ENCODE measurements at regions of chr20 and their contacts with region 1.

Region 1: DNA sequence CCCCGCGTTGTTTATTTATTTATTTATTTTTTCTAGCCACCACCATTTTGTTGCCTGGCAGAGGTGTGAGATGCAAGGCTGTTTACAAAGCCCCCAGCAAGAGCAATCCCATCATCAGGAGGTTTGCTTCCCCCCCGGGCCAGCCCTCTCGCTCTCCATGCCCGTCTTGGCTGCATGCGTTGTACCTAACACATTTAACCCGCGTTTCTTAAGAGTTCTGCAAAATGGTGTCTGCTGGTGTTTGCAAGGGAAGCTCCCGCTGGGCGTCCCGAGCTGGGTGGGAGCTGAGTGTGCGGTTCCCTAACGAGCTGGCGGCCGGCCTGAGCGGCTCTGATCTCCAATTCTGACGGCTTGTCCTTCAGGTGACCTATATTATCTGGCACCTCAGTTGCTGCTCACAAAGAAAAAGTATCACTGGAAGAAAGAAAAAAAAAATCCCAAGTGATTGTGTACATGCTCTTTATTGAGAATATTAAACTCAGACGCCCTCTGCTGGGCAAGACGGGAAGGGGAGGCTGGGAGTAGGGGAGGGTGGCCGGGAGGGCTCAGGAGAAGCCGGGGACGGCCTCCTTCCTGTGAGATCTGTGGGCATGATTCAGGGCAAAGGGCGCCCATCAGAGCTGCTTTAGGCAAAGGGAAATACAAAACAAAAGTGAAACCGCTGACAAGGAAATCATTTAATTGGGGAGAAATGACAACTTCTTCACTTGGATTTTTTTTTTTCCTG is 154.8 kb downstream of the BCAS1 start:
- DNase-seq: peak; percentile 86
- ATAC-seq: peak; percentile 88
- H3K4me3 ChIP-seq: peak overlapping the region; percentile 63
- H3K27ac ChIP-seq: peak overlapping the region; percentile 82
- H3K4me1 ChIP-seq: peaks cover 31% of the 10 kb centered on the region
- H3K27me3 ChIP-seq: no peaks in the 10 kb centered on the region
- CTCF ChIP-seq: peak; percentile 93
- POLR2A ChIP-seq: peak; percentile 53; the same call in 1 of the 2 replicates
- RAD21 ChIP-seq: peak; percentile 92

Region 2: GRCh38 chr20:53656293-53657202 is 259.1 kb before region 1 on chr20:
- CTCF ChIA-PET with region 1: no interaction called
- POLR2A ChIA-PET with region 1: no interaction called
- dilution Hi-C with region 1: no loop called
- in situ Hi-C with region 1: no loop called
- intact Hi-C with region 1: loop called (anchors 5 kb)
- DNase-seq: peak; percentile 76
- ATAC-seq: peak; percentile 44; the same call in 1 of the 2 replicates
- H3K4me3 ChIP-seq: no peak overlapping the region
- H3K27ac ChIP-seq: peak overlapping the region; percentile 50; the same call in 1 of the 2 replicates
- H3K4me1 ChIP-seq: peaks cover 30% of the 10 kb centered on the region
- H3K27me3 ChIP-seq: no peaks in the 10 kb centered on the region
- CTCF ChIP-seq: no peak
- POLR2A ChIP-seq: no peak
- RAD21 ChIP-seq: no peak

Region 3: DNA sequence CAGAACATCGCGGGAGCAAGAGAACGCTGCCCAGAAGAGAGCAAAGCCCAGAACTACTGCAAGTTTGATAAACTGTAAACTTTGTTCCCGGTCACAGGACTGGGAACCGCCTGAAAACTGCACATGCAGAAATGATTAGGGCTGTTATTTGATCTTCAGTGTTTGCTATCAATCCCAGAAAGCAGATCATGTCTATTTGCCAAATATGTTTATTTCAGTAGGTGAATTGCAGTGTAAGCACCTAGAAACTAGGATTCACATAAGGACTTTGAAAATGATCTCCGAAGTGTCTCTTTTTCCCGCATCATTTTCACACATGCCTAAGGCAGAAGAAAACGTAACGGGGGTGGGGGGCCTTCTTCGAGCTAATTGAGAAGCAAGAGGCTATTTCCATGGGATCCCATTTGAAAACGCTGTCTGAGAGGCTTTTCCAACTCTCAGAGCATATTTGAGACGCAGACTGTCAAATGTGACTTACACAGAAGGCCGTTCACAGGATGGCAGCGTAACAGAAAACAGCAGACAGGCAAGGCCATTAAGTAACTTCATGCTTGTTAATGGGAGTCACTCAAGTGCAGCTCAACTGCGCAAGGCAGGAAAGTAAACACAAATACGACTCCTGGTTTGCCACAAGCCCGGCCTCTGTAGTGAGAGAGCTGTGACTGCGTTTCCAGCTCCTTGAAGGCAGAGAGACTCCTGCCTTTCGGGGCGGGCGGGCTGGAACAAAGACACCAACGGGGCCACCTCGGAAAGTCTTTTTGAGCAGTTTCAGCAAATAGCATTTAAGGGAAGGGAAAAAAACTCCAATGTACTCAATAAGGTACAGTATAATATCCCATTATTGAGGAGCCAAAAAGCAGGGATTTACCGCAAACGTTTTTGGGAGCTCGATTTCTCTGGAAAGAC is 177.3 kb before region 1 on chr20:
- CTCF ChIA-PET with region 1: interaction called, 4 read pairs
- POLR2A ChIA-PET with region 1: no interaction called
- dilution Hi-C with region 1: no loop called
- in situ Hi-C with region 1: no loop called
- intact Hi-C with region 1: loop called (anchors 2 kb)
- DNase-seq: peak; percentile 90
- ATAC-seq: peak; percentile 82
- H3K4me3 ChIP-seq: peak overlapping the region; percentile 22; the same call in 1 of the 2 replicates
- H3K27ac ChIP-seq: peak overlapping the region; percentile 75
- H3K4me1 ChIP-seq: peaks cover 28% of the 10 kb centered on the region
- H3K27me3 ChIP-seq: no peaks in the 10 kb centered on the region
- CTCF ChIP-seq: no peak
- POLR2A ChIP-seq: peak; percentile 75
- RAD21 ChIP-seq: no peak

Region 4: GRCh38 chr20:53773792-53774401 is 141.7 kb before region 1 on chr20:
- CTCF ChIA-PET with region 1: interaction called, 3 read pairs
- POLR2A ChIA-PET with region 1: no interaction called
- dilution Hi-C with region 1: no loop called
- in situ Hi-C with region 1: no loop called
- intact Hi-C with region 1: loop called (anchors 2 kb)
- DNase-seq: peak; percentile 97
- ATAC-seq: peak; percentile 83
- H3K4me3 ChIP-seq: no peak overlapping the region
- H3K27ac ChIP-seq: peak overlapping the region; percentile 72; the same call in 1 of the 2 replicates
- H3K4me1 ChIP-seq: peaks cover 17% of the 10 kb centered on the region
- H3K27me3 ChIP-seq: no peaks in the 10 kb centered on the region
- CTCF ChIP-seq: no peak
- POLR2A ChIP-seq: no peak
- RAD21 ChIP-seq: peak; percentile 34; the same call in 1 of the 2 replicates

Region 5: GRCh38 chr20:53869466-53870258 is 45.9 kb before region 1 on chr20:
- CTCF ChIA-PET with region 1: interaction called, 3 read pairs
- POLR2A ChIA-PET with region 1: no interaction called
- dilution Hi-C with region 1: no loop called
- in situ Hi-C with region 1: no loop called
- intact Hi-C with region 1: loop called (anchors 2 kb)
- DNase-seq: peak; percentile 74
- ATAC-seq: peak; percentile 17; the same call in 1 of the 2 replicates
- H3K4me3 ChIP-seq: no peak overlapping the region
- H3K27ac ChIP-seq: peak overlapping the region; percentile 50; the same call in 1 of the 2 replicates
- H3K4me1 ChIP-seq: peaks cover 29% of the 10 kb centered on the region
- H3K27me3 ChIP-seq: no peaks in the 10 kb centered on the region
- CTCF ChIP-seq: peak; percentile 68
- POLR2A ChIP-seq: no peak
- RAD21 ChIP-seq: peak; percentile 74

Region 6: GRCh38 chr20:53939572-53940359 is 24.2 kb after region 1 on chr20:
- CTCF ChIA-PET with region 1: interaction called, 17 read pairs
- POLR2A ChIA-PET with region 1: no interaction called
- dilution Hi-C with region 1: no loop called
- in situ Hi-C with region 1: no loop called
- intact Hi-C with region 1: loop called (anchors 2 kb)
- DNase-seq: peak; percentile 94
- ATAC-seq: peak; percentile 89
- H3K4me3 ChIP-seq: no peak overlapping the region
- H3K27ac ChIP-seq: peak overlapping the region; percentile 66
- H3K4me1 ChIP-seq: peaks cover 16% of the 10 kb centered on the region
- H3K27me3 ChIP-seq: no peaks in the 10 kb centered on the region
- CTCF ChIP-seq: peak; percentile 92
- POLR2A ChIP-seq: 0 out of 2 replicates have a peak, but pooled peaks have one; percentile 61
- RAD21 ChIP-seq: peak; percentile 95

Measured in IMR-90 (cell line).